A549 (cell line): ENCODE measurements at regions of chr19 and their contacts with region 1.

Region 1: GRCh38 chr19:45591004-45591637 is 6.5 kb upstream of the OPA3 start:
- DNase-seq: peak; percentile 80 to 85
- ATAC-seq: peak; percentile 83 to 93
- H3K4me3 ChIP-seq: no peak overlapping the region
- H3K27ac ChIP-seq: peak overlapping the region in 1 of 2 experiments; percentile 39; a peak in 1 of 6 replicates
- H3K4me1 ChIP-seq: 0 out of 3 replicates have a peak, but pooled peaks cover 4% of the 10 kb centered on the region
- CTCF ChIP-seq: peak; percentile 67
- EP300 ChIP-seq: no peak
- POLR2A ChIP-seq: no peak
- RAD21 ChIP-seq: peak; percentile 84 to 96

Region 2: DNA sequence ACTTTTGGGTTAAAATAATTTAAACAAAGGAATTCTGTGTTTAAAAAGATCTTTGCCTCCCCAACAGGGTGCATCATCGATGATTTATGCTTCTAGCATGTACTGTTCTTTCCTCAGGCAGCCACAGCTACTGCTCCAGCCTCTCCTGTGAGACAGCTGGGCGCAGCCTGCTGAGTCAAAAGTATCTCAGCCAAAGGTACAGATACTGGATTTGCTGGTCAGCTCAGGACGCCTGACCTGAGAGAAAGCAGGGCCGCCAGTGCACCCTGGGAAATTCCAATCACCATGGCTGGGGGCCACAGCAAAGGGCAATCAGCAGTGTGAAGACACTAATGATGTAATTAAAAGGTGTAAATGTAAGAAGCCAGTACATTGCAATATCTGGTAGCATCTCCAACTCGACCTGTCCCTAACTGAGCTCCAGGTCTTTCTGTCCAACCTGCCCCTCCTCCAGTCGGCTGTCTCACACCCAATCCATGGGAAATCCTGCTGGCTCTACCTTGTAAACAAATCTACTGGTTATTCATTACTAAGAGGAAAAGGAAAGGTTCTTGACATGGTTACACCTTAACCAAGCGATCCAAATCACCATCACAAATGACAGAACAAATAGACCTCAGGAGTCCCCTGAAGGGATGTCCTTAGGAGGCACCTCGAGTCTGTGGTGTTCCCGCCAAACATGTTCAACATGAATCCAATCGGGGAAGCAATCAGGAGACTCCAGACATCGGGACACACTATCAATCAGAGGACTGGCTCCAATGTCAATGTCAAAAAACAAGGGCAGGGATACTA is 13.8 kb before region 1 on chr19:
- CTCF ChIA-PET with region 1: interaction called, 16 read pairs
- POLR2A ChIA-PET with region 1: no interaction called
- DNase-seq: peak; percentile 82 to 91
- ATAC-seq: peak; percentile 95 to 97
- H3K4me3 ChIP-seq: 0 out of 3 replicates have a peak overlapping the region, but pooled peaks have one; percentile 2
- H3K27ac ChIP-seq: peak overlapping the region; percentile 79 to 85
- H3K4me1 ChIP-seq: peaks cover 52% of the 10 kb centered on the region
- CTCF ChIP-seq: no peak
- EP300 ChIP-seq: peak in 1 of 2 experiments; percentile 38; a peak in 1 of 5 replicates
- POLR2A ChIP-seq: no peak
- RAD21 ChIP-seq: peak in 1 of 2 experiments; percentile 36; a peak in 1 of 5 replicates

Region 3: DNA sequence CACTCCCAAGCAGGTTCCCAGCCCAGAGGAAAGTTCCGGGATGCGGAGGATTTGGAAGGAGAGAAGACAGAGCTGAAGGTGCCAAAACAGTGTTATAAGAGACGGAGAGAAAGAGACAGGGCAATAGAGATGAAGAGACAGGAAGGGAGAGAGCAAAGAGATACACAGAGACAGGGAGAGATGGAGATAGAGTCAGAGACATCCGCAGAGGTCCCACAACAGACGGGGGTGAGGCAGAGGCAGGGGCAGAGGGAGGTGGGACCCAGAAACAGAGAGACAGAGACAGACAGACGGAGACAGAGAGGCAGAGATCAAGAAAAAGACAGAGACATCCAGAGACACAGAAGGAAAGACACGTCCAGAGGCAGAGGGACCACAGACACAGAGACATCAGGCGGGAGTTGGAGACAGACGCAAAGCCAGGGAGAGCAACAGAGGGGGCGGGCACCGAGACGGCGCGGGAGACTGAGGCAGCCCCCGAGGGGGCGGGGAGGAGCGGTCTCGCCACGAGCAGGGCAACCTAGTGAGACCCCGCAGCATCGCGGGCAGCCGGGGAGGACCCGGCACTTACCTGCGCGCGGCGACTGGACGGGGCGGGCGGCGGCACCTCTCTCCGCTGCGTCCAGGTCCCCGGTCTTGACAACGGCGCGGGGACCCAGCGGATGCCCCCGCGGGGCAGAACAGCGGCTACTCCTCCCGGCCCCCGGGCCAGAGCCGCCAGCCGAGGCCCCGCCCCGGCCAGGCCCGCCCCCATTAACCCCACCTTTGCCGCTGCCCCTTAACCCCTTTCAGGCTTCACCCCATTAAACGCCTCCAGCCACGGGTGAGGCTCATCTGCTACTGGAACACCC is 10.6 kb after region 1 on chr19 and contains the start of gene GPR4:
- CTCF ChIA-PET with region 1: interaction called, 52 read pairs
- POLR2A ChIA-PET with region 1: no interaction called
- DNase-seq: no peak
- ATAC-seq: peak in 1 of 2 experiments; percentile 57; a peak in 3 of 6 replicates
- H3K4me3 ChIP-seq: peak within 1 kb of the TSS; percentile 29
- H3K27ac ChIP-seq: peak within 1 kb of the TSS in 1 of 2 experiments; percentile 54; a peak in 3 of 6 replicates
- H3K4me1 ChIP-seq: peaks cover 24% of the 10 kb centered on the region
- CTCF ChIP-seq: no peak
- EP300 ChIP-seq: no peak
- POLR2A ChIP-seq: no peak
- RAD21 ChIP-seq: no peak
- polyA plus RNA-seq, gene GPR4: 0.10 TPM in 1 of 2 replicates, not detected in the other

Region 4: DNA sequence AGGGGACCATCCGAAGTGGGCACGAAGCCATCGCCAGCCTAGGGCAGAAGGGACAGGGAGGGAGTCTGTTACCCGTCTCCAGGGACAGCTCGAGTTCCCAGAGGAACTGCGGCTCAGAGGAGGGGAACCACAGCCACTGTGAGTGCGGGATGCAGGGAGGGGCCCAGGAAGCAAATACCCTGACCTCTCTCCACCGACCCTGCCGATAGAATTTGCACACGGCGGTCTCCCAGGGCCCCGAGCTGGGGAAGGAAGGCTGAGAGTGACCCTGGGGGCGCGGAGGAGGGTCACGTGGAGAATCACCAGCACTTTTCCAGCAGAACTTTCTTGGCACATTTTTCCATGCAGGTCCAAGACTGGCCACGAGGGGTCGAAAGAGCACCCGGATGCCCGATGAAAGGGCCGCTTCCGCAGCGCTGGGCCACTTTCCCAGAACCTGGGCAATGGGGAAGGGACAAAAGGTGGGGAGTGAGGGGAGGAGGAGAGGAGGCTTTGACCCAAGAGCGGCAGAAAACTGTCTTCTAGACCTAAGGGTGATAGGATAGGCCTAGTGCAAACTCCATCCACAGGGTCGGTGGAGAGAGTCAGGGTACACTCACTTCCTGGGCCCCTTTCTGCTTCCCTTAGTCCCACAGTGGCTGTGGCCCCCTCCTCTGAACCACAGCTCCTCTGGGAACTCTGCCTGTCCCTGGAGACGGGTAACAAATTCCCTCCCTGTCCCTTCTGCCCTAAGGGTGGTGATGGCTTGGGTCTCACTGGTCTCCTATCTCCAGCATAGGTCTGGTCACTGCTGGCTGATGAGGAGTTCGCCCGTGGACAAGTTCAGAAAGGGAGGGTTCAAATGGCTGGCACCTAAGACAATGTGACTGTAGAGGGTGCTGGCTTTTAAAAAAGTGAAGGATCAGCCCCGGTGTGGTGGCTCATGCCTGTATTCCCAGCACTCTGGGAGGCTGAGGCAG is 16.2 kb after region 1 on chr19:
- CTCF ChIA-PET with region 1: interaction called, 52 read pairs
- POLR2A ChIA-PET with region 1: no interaction called
- DNase-seq: peak; percentile 77 to 81
- ATAC-seq: peak; percentile 82 to 86
- H3K4me3 ChIP-seq: peak overlapping the region; percentile 28; the same call in 2 of the 3 replicates
- H3K27ac ChIP-seq: peak overlapping the region; percentile 65 to 84
- H3K4me1 ChIP-seq: peaks cover 8% of the 10 kb centered on the region
- CTCF ChIP-seq: peak; percentile 91
- EP300 ChIP-seq: no peak
- POLR2A ChIP-seq: no peak
- RAD21 ChIP-seq: peak; percentile 80 to 84

Region 5: DNA sequence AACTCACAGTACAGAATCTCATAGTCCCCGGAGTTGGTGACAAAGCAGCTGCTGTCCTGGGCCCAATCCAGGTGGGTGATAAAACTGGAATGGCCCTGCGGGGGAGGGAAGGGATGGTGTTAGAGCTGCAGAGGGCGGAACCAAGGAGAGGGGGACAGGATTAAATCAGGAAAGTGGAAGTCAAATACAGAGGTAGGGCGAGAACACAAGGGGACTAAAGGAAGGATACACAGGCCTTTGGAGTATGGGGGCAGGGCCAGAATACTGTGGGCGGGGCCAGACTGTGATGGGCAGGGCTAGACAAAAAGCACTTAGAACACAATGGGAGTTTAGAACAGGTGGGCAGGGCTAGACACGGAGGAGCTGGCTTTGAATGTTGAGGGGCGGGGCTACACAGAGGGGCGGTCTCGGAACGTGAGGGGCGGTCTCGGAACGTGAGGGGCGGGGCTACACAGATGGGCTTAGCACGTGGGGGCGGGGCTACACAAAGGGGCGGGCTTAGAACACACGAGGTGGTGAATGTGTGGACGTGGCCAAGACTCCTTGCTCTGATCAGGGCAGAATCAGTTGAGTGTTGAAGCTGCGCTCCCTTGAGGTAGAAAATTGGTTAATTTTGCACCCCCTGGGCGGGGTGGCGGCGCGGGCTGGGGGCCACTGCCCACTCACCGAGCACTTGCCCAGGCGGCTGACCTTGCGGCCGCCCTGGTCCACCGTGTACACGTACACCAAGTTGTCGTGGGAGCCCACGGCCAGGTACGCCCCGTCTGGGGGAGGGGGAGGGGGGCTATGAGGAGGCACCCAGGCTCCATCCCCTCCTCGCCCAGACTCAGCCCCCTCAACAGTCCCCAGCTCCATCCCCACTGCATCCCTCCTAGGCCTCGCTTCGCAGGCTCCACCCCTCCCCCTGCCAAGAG is 24.9 kb after region 1 on chr19:
- CTCF ChIA-PET with region 1: interaction called, 13 read pairs
- POLR2A ChIA-PET with region 1: no interaction called
- DNase-seq: peak; percentile 96 to 97
- ATAC-seq: peak; percentile 62 to 84
- H3K4me3 ChIP-seq: no peak overlapping the region
- H3K27ac ChIP-seq: peak overlapping the region; percentile 55 to 73
- H3K4me1 ChIP-seq: peaks cover 30% of the 10 kb centered on the region
- CTCF ChIP-seq: no peak
- EP300 ChIP-seq: no peak
- POLR2A ChIP-seq: no peak
- RAD21 ChIP-seq: no peak

Region 6: DNA sequence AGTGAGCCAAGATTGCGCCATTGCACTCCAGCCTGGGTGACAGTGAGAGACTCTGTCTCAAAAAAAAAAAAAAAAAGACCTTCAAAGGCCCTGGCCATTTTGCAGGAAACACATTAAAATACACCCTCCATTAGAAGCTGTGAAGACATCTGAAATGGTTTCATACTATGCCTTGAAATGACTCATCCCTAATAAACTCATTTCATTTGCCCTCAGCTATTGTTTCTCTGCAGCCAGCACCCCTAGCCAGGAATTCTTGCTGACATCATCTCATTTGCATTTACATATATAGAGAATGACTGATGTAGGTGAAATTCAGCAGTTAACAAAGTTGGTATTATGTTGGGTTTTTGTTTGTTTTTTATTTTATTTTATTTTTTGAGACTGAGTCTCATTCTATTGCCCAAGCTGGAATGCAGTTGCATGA is 39.4 kb after region 1 on chr19:
- CTCF ChIA-PET with region 1: interaction called, 12 read pairs
- POLR2A ChIA-PET with region 1: no interaction called
- DNase-seq: peak; percentile 63 to 84
- ATAC-seq: peak; percentile 59 to 61; a peak in 5 of 6 replicates
- H3K4me3 ChIP-seq: no peak overlapping the region
- H3K27ac ChIP-seq: peak overlapping the region; percentile 10 to 79; a peak in 5 of 6 replicates
- H3K4me1 ChIP-seq: peaks cover 33% of the 10 kb centered on the region
- CTCF ChIP-seq: no peak
- EP300 ChIP-seq: no peak; a peak in 1 of 5 replicates
- POLR2A ChIP-seq: no peak
- RAD21 ChIP-seq: no peak